CD8-positive, alpha-beta T cell (primary cell): ENCODE measurements at regions of chr12 and their contacts with region 1.

Region 1: DNA sequence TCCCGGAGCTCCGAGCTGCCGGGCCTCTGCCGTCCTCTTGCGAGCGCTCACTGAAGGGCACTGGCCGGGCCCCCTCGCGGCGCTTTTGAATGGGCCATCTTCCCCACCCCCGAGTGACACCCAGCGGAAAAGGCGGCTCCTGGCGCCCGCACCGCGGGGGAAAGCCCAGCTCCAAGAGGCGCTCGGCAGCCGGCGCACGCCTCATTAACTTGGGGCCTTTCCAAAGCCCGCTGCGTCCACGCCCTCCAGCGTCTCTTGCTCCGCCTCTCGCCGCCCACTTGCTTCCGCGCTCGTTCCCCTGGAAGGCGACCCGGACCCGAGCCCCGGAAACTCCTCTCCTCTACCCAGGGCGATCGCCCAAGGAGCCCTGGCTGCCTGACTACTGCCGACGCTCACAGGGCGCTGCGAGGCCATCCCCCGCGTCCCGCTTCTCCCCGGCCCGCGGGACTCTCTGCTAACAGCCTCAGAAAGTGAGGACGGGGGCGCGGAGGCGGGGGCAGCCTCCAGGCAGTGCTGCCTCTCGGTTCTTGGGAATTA is at the start of gene PHLDA1:
- DNase-seq: peak; percentile 78 to 96 (median 88)
- ATAC-seq: peak; percentile 85
- H3K4me3 ChIP-seq: peak within 1 kb of the TSS; percentile 73 to 81
- H3K4me3 Mint-ChIP-seq: peak within 1 kb of the TSS; percentile 94
- H3K27ac ChIP-seq: peak within 1 kb of the TSS; percentile 63 to 76
- H3K27ac Mint-ChIP-seq: peak within 1 kb of the TSS; percentile 80
- H3K4me1 ChIP-seq: peaks cover 20% of the 10 kb centered on the region
- H3K4me1 Mint-ChIP-seq: peaks cover 28% of the 10 kb centered on the region
- H3K27me3 ChIP-seq: no peaks in the 10 kb centered on the region
- H3K27me3 Mint-ChIP-seq: peaks cover 2% of the 10 kb centered on the region
- CTCF ChIP-seq: peak; percentile 40
- total RNA-seq, gene PHLDA1: 5.6 to 5.8 TPM

Region 2: DNA sequence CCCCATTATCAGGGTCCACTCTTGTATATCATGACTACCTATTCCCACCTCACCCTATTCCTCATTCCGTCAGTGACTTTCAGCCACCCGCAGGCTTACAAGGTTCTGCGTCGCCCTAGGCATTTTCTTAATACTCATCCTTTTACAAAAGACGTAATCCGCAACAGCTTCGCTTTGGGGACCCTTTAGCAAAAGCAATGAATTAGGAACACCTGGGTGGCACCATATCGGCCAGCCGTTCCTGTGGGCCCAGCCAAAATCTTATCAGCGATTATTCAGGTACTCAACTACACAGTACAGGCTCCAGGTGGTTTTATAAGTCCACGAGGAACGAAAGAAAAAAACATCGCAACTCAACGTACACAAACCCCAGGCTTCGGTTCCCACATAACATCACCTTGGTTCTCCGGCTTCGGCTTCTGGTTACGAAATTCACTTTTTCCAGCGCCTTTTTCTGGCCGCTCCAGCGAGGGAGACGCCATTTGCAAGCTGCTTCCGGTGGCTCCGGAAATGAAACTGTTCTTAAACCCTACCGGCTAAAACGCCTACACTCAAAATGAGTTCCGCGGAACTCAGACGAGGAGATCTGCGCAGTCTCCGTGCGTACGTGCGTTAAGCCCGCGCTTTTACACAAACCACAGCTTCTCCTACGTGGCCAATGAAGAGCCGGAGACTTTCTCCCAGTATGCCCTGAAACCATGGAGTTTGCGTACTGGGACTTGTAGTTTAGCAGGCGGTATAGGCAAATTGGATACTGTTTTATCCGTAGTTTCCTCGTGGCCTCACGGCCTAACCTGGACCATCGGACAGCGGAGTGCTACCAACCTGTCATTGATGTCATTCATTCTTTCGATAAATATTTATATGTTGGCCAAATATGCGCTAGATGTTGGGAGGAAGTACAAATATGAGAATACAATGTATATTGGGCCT is 520.2 kb before region 1 on chr12 and contains the start of gene KRR1:
- CTCF ChIA-PET with region 1: interaction called, 4 read pairs
- POLR2A ChIA-PET with region 1: interaction called, 15 read pairs
- intact Hi-C with region 1: loop called (anchors 5 kb)
- DNase-seq: peak; percentile 75 to 98 (median 88)
- ATAC-seq: peak; percentile 95
- H3K4me3 ChIP-seq: peak within 1 kb of the TSS; percentile 89 to 93
- H3K4me3 Mint-ChIP-seq: peak within 1 kb of the TSS; percentile 98
- H3K27ac ChIP-seq: peak within 1 kb of the TSS; percentile 89
- H3K27ac Mint-ChIP-seq: peak within 1 kb of the TSS; percentile 98
- H3K4me1 ChIP-seq: peaks cover 18% of the 10 kb centered on the region
- H3K4me1 Mint-ChIP-seq: peaks cover 33% of the 10 kb centered on the region
- H3K27me3 ChIP-seq: no peaks in the 10 kb centered on the region
- H3K27me3 Mint-ChIP-seq: no peaks in the 10 kb centered on the region
- CTCF ChIP-seq: no peak
- total RNA-seq, gene KRR1: 158 to 161 TPM

Region 3: DNA sequence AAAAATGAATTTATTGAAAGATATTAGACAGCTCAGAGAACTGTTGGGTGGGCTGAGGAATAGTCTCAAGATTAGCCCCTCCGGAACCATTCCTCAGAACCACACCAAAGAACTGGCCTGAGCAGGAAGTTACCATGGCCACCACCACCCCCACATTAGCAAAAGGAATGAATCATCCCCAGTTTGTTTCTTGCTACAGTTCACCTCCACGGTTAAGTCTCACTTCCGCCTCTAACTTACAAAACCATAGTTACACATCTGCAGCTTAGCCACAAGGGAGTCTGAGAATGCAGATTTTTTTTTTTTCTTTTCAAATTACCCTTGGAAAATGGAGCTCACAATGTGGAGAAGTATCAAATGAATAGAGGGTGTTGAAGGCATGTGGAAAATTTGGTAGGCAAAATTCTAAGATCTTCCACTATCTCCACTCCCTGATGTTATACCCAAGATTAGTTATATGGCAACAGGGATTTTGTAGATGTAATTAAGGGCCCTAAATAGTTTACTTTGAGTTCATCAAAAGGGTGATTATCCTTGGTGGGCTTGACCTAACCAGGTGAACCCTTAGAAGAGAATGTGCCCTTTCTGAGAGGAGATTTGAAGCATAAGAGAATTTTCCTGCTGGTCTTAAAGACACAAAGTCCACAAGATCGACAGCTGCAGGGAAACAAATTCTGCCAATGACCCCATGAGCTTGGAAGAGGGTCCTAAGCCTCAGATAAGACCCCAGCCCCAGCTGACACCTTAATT is 390.4 kb before region 1 on chr12:
- CTCF ChIA-PET with region 1: no interaction called
- POLR2A ChIA-PET with region 1: no interaction called
- intact Hi-C with region 1: loop called in 1 of 2 experiments (anchors 10 kb)
- DNase-seq: peak in 5 of 9 experiments; percentile 8 to 54 (median 32)
- ATAC-seq: no peak
- H3K4me3 ChIP-seq: no peak overlapping the region
- H3K4me3 Mint-ChIP-seq: no peak overlapping the region
- H3K27ac ChIP-seq: no peak overlapping the region
- H3K27ac Mint-ChIP-seq: no peak overlapping the region
- H3K4me1 ChIP-seq: no peaks in the 10 kb centered on the region
- H3K4me1 Mint-ChIP-seq: peaks cover 9% of the 10 kb centered on the region
- H3K27me3 ChIP-seq: no peaks in the 10 kb centered on the region
- H3K27me3 Mint-ChIP-seq: no peaks in the 10 kb centered on the region
- CTCF ChIP-seq: no peak

Region 4: GRCh38 chr12:75933101-75933500 is 98.5 kb before region 1 on chr12:
- CTCF ChIA-PET with region 1: no interaction called
- POLR2A ChIA-PET with region 1: interaction called, 3 read pairs
- intact Hi-C with region 1: loop called (anchors 5 kb)
- DNase-seq: no peak
- ATAC-seq: no peak
- H3K4me3 ChIP-seq: no peak overlapping the region
- H3K4me3 Mint-ChIP-seq: no peak overlapping the region
- H3K27ac ChIP-seq: no peak overlapping the region
- H3K27ac Mint-ChIP-seq: no peak overlapping the region
- H3K4me1 ChIP-seq: peaks cover 4% of the 10 kb centered on the region
- H3K4me1 Mint-ChIP-seq: peaks cover 10% of the 10 kb centered on the region
- H3K27me3 ChIP-seq: no peaks in the 10 kb centered on the region
- H3K27me3 Mint-ChIP-seq: peaks cover 3% of the 10 kb centered on the region
- CTCF ChIP-seq: no peak

Region 5: GRCh38 chr12:76020731-76021672 is 10.6 kb before region 1 on chr12:
- CTCF ChIA-PET with region 1: interaction called, 11 read pairs
- POLR2A ChIA-PET with region 1: interaction called, 51 read pairs
- intact Hi-C with region 1: loop called (anchors 1 kb)
- DNase-seq: peak; percentile 23 to 91 (median 62)
- ATAC-seq: peak; percentile 79
- H3K4me3 ChIP-seq: peak overlapping the region in 1 of 2 experiments; percentile 9
- H3K4me3 Mint-ChIP-seq: peak overlapping the region; percentile 61
- H3K27ac ChIP-seq: peak overlapping the region; percentile 51 to 86
- H3K27ac Mint-ChIP-seq: peak overlapping the region; percentile 96
- H3K4me1 ChIP-seq: peaks cover 24% of the 10 kb centered on the region
- H3K4me1 Mint-ChIP-seq: peaks cover 24% of the 10 kb centered on the region
- H3K27me3 ChIP-seq: no peaks in the 10 kb centered on the region
- H3K27me3 Mint-ChIP-seq: no peaks in the 10 kb centered on the region
- CTCF ChIP-seq: no peak